Sciatic nerve (tissue), 2 donors: ENCODE measurements at regions of chr6 and their contacts with region 1.

Region 1: GRCh38 chr6:10747251-10747972 is at the start of gene TMEM14B:
- DNase-seq: peak; percentile 100
- ATAC-seq: peak; percentile 100
- total RNA-seq, gene TMEM14B: 58.9 TPM

Region 2: DNA sequence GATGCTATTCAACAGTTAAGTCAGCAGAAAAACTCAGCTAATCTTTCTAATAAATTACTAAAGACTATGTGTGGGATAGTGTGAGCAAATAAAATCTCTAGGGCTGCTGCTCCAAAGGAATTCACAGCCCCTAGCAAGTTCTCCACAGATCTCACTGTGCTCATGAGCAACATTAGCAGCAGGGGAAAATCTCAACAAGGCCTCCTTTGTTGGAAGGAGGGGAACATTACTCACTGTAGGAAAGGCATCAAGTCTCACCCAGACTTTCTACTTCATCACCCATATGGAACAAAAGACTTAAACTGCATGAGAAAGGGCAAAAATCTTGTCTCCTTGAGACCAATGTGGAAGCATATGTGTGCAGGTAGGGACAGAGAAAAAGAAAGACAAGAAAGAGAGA is 1585.7 kb before region 1 on chr6:
- intact Hi-C with region 1: no loop called
- DNase-seq: no peak
- ATAC-seq: no peak

Region 3: GRCh38 chr6:10694302-10695085 is 52.9 kb before region 1 on chr6 and contains the starts of genes C6orf52 and PAK1IP1:
- intact Hi-C with region 1: loop called (anchors 10 kb)
- DNase-seq: peak; percentile 94
- ATAC-seq: peak; percentile 100
- total RNA-seq, gene C6orf52: 1.1 TPM
- total RNA-seq, gene PAK1IP1: 12.3 TPM

Region 4: DNA sequence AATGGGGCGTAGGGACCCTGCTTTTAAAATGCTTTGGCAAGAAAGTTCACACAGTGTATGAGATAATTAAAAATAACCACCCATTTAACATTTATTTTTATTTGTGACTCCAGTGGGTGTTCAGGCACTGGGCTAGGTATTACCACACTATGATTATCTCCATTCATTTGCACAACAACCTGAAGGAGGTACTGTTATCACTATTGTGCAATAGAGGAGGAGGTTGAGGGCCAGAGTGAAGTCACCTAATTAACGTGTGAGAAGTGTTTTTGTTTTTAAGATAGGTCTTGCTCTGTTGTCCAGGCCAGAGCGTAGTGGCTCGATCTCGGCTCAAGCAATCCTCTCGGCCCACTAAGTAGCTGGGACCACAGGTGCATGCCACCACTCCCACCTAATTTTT is 61.7 kb after region 1 on chr6:
- intact Hi-C with region 1: no loop called
- DNase-seq: no peak
- ATAC-seq: no peak